CD8-positive, alpha-beta T cell (primary cell): ENCODE measurements at regions of chr3 and their contacts with region 1.

Region 1: DNA sequence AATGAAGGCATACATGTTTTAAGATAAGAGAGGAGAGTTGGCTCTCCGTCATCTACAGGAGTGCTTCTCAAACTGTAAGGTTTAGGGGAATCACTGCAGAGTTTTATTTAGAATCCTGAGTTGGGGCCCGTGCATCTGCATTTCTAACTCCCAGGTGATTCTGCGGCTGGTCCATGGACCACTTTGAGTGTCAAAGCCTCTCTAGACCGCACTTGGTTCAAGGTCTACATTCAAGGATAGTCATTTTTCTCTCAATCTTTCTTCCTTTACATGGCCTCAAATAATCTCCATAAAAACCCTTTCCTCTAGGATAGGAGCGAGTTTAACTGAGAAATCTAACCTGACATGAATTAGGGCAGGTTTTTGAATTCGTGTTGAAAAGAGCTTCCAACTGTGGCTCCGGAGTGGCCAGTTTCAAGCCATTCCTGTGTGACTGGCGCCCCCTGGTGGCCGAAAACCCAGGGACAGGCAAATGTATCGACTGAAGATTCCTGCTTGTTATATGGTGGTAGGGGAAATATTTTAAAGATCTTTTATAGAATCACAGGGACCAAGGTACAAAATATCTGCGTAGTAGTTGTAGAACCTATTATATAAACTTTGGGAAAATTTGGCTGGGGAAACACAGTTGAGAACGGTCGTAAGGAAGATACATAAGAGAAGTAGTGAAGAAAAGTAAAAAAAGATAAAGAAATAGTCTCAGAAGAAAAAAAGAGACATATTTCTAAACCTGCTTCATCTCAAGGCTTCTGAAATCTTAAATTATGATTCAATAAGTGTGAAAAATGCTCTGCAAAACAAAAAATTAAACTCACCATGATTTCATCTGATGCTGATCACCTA is 11.9 kb downstream of the GABRR3 start:
- DNase-seq: peak; percentile 72 to 98 (median 86)
- ATAC-seq: peak; percentile 78
- H3K4me3 ChIP-seq: no peak overlapping the region
- H3K4me3 Mint-ChIP-seq: no peak overlapping the region
- H3K27ac ChIP-seq: no peak overlapping the region
- H3K27ac Mint-ChIP-seq: no peak overlapping the region
- H3K4me1 ChIP-seq: no peaks in the 10 kb centered on the region
- H3K4me1 Mint-ChIP-seq: peaks cover 2% of the 10 kb centered on the region
- H3K27me3 ChIP-seq: no peaks in the 10 kb centered on the region
- H3K27me3 Mint-ChIP-seq: no peaks in the 10 kb centered on the region
- CTCF ChIP-seq: peak; percentile 98

Region 2: GRCh38 chr3:97719156-97719821 is 303.9 kb before region 1 on chr3:
- CTCF ChIA-PET with region 1: interaction called, 3 read pairs
- POLR2A ChIA-PET with region 1: no interaction called
- intact Hi-C with region 1: loop called in 1 of 2 experiments (anchors 5 kb)
- DNase-seq: peak; percentile 8 to 76 (median 57)
- ATAC-seq: peak; percentile 94
- H3K4me3 ChIP-seq: no peak overlapping the region
- H3K4me3 Mint-ChIP-seq: no peak overlapping the region
- H3K27ac ChIP-seq: no peak overlapping the region
- H3K27ac Mint-ChIP-seq: no peak overlapping the region
- H3K4me1 ChIP-seq: no peaks in the 10 kb centered on the region
- H3K4me1 Mint-ChIP-seq: peaks cover 2% of the 10 kb centered on the region
- H3K27me3 ChIP-seq: no peaks in the 10 kb centered on the region
- H3K27me3 Mint-ChIP-seq: peaks cover 3% of the 10 kb centered on the region
- CTCF ChIP-seq: peak; percentile 95

Region 3: DNA sequence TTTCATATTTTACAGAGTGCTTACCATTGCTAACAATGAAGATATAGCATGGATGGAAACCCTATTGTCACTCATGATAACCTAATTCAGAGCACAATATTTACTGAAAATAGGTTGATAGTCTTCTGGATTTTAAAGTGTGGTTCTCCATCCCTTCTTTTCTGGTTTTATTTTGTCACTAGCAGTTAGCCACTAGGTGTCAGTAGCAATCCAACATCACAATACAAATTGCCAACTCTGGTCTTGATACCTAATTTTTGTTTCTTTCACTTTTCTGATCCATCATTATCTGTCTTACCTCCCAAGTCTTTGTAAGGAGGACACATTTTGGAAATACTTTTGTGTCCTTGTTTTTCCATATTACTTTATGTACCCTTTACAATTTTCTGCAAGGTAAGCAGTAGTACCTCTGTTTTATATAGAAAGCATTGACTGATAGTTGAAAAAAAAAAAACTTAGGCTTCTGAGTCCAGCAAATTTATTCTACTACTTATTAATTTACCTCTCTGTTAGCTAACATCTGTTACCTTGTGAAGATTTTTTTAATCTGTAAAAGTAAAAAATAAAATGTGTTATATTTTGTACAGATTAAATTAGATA is 229.7 kb before region 1 on chr3:
- CTCF ChIA-PET with region 1: interaction called, 92 read pairs
- POLR2A ChIA-PET with region 1: interaction called, 5 read pairs
- intact Hi-C with region 1: loop called (anchors 1 kb)
- DNase-seq: peak in 3 of 9 experiments; percentile 14 to 78 (median 73)
- ATAC-seq: peak; percentile 71
- H3K4me3 ChIP-seq: no peak overlapping the region
- H3K4me3 Mint-ChIP-seq: no peak overlapping the region
- H3K27ac ChIP-seq: no peak overlapping the region
- H3K27ac Mint-ChIP-seq: no peak overlapping the region
- H3K4me1 ChIP-seq: no peaks in the 10 kb centered on the region
- H3K4me1 Mint-ChIP-seq: no peaks in the 10 kb centered on the region
- H3K27me3 ChIP-seq: no peaks in the 10 kb centered on the region
- H3K27me3 Mint-ChIP-seq: no peaks in the 10 kb centered on the region
- CTCF ChIP-seq: peak; percentile 81

Region 4: DNA sequence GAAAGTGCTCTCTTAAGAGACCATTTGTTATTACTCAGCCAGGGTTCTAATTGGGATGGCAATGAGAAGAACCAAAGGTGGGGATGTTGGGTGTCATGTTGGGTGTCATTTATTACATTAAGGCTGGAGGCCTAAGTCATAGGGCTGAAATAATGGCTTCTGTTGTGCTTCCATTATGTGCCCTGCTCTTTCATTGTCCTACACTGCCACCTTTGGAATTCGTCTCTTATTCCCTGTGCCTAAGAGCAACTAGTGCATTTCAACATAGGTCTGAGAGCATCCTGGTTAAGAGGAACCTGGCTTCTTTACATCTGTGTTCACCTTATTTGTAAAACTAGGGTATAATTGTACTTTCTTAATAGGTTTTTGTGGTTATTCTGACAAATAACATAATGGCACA is 83.2 kb before region 1 on chr3:
- CTCF ChIA-PET with region 1: interaction called, 6 read pairs
- POLR2A ChIA-PET with region 1: no interaction called
- intact Hi-C with region 1: loop called in 1 of 2 experiments (anchors 1 kb)
- DNase-seq: peak in 2 of 9 experiments; percentile 43 to 53
- ATAC-seq: no peak
- H3K4me3 ChIP-seq: no peak overlapping the region
- H3K4me3 Mint-ChIP-seq: no peak overlapping the region
- H3K27ac ChIP-seq: no peak overlapping the region
- H3K27ac Mint-ChIP-seq: peak overlapping the region; percentile 20
- H3K4me1 ChIP-seq: no peaks in the 10 kb centered on the region
- H3K4me1 Mint-ChIP-seq: no peaks in the 10 kb centered on the region
- H3K27me3 ChIP-seq: no peaks in the 10 kb centered on the region
- H3K27me3 Mint-ChIP-seq: no peaks in the 10 kb centered on the region
- CTCF ChIP-seq: no peak

Region 5: GRCh38 chr3:98039322-98040024 is 16.3 kb after region 1 on chr3:
- CTCF ChIA-PET with region 1: interaction called, 30 read pairs
- POLR2A ChIA-PET with region 1: interaction called, 3 read pairs
- intact Hi-C with region 1: no loop called
- DNase-seq: peak; percentile 27 to 89 (median 66)
- ATAC-seq: peak; percentile 96
- H3K4me3 ChIP-seq: peak overlapping the region; percentile 37 to 38
- H3K4me3 Mint-ChIP-seq: peak overlapping the region; percentile 81
- H3K27ac ChIP-seq: peak overlapping the region; percentile 33 to 57
- H3K27ac Mint-ChIP-seq: peak overlapping the region; percentile 92
- H3K4me1 ChIP-seq: no peaks in the 10 kb centered on the region
- H3K4me1 Mint-ChIP-seq: peaks cover 7% of the 10 kb centered on the region
- H3K27me3 ChIP-seq: no peaks in the 10 kb centered on the region
- H3K27me3 Mint-ChIP-seq: peaks cover 22% of the 10 kb centered on the region
- CTCF ChIP-seq: peak; percentile 100